Mammary epithelial cell (primary cell): ENCODE measurements at regions of chr6 and their contacts with region 1.

Region 1: GRCh38 chr6:4055420-4056041 is 23.4 kb downstream of the FAM217A start:
- DNase-seq: peak; percentile 73
- H3K4me3 ChIP-seq: no peak overlapping the region
- H3K27ac ChIP-seq: peak overlapping the region; percentile 37
- H3K4me1 ChIP-seq: peaks cover 39% of the 10 kb centered on the region
- H3K27me3 ChIP-seq: no peaks in the 10 kb centered on the region
- CTCF ChIP-seq: peak; percentile 52 to 67

Region 2: GRCh38 chr6:4018172-4018905 is 37.2 kb before region 1 on chr6:
- CTCF ChIA-PET with region 1: interaction called, 5 read pairs
- dilution Hi-C with region 1: no loop called
- in situ Hi-C with region 1: no loop called
- intact Hi-C with region 1: loop called (anchors 2 kb)
- DNase-seq: peak; percentile 96
- H3K4me3 ChIP-seq: peak overlapping the region; percentile 57 to 98 (median 73)
- H3K27ac ChIP-seq: peak overlapping the region; percentile 78
- H3K4me1 ChIP-seq: peaks cover 15% of the 10 kb centered on the region
- H3K27me3 ChIP-seq: no peaks in the 10 kb centered on the region
- CTCF ChIP-seq: peak; percentile 22 to 59

Region 3: GRCh38 chr6:4125936-4126864 is 70.7 kb after region 1 on chr6:
- CTCF ChIA-PET with region 1: interaction called, 3 read pairs
- dilution Hi-C with region 1: no loop called
- in situ Hi-C with region 1: no loop called
- intact Hi-C with region 1: loop called (anchors 1 kb)
- DNase-seq: peak; percentile 77
- H3K4me3 ChIP-seq: no peak overlapping the region
- H3K27ac ChIP-seq: no peak overlapping the region
- H3K4me1 ChIP-seq: peaks cover 17% of the 10 kb centered on the region
- H3K27me3 ChIP-seq: no peaks in the 10 kb centered on the region
- CTCF ChIP-seq: peak; percentile 39 to 42

Region 4: GRCh38 chr6:4145083-4145482 is 89.6 kb after region 1 on chr6:
- CTCF ChIA-PET with region 1: interaction called, 3 read pairs
- dilution Hi-C with region 1: no loop called
- in situ Hi-C with region 1: loop called (anchors 5 to 10 kb)
- intact Hi-C with region 1: no loop called
- DNase-seq: no peak
- H3K4me3 ChIP-seq: no peak overlapping the region
- H3K27ac ChIP-seq: no peak overlapping the region
- H3K4me1 ChIP-seq: no peaks in the 10 kb centered on the region
- H3K27me3 ChIP-seq: peaks cover 2% of the 10 kb centered on the region
- CTCF ChIP-seq: no peak

Region 5: DNA sequence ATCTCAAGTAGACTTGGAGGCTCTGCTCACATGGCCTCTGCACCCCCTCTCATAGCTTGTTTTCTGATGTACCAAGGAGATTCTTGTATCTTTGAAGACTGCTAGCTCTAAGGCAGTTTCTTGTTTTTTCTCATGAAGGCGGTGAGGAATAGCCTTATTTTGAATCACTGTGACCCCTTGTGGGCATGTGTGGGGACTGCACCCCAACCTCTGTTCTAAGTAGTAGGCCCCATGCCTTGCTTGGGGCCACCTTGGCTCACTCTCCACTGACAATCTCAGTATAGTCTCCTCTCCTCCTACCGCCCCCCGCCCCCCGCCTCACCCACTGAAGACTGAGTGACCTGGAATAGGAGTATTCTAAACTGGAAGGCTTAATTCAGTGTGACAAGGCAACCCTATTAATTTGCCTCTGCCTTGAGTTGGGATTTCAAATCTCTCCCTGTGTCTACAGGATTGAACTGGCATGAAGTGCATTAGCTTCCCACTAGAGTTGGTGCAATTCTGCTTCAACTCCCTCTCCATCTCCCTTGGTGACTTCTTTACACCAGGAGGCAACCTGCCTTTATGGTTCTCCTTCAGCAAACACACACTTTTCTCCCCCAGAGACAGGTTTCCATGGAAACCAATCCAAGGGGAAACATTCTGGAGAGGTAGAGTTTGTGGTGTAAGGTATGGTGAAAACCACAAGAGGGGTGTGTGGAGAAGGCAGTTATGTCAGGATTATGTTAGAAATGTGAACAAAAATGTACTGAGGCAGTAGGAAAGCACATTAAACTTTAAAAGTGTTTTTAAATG is 155.3 kb after region 1 on chr6:
- CTCF ChIA-PET with region 1: no interaction called
- dilution Hi-C with region 1: no loop called
- in situ Hi-C with region 1: no loop called
- intact Hi-C with region 1: loop called (anchors 1 kb)
- DNase-seq: peak; percentile 30
- H3K4me3 ChIP-seq: no peak overlapping the region
- H3K27ac ChIP-seq: no peak overlapping the region
- H3K4me1 ChIP-seq: peaks cover 6% of the 10 kb centered on the region
- H3K27me3 ChIP-seq: no peaks in the 10 kb centered on the region
- CTCF ChIP-seq: peak; percentile 72 to 84